ENCODE measurements at regions of chr7 and their contacts with region 1.

Region 1: DNA sequence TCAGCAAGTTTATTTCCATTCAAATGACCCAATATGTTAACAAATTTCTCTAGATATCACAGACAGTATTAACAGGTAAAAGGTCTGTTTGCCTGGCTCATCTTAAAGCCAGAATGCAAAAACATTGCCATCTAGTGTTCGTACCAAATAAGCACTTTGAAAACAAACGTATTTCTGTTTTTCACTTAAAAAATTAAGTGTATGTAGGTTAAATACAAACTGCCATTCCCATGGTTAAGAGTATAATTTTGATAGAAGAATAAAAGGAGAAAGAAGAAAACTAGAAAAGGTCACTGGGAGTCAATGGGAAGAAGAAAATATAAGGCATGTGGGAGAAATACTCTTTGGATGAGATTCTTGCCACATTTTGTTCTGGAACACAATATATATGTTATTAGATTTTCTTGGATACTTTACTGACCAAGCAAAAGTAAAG is 51.0 kb downstream of the ORC5 start:
- DNase-seq: peak; percentile 44
- H3K4me3 ChIP-seq: no peak overlapping the region
- H3K27ac ChIP-seq: no peak overlapping the region
- H3K4me1 ChIP-seq: no peaks in the 10 kb centered on the region
- H3K27me3 ChIP-seq: no peaks in the 10 kb centered on the region
- CTCF ChIP-seq: peak; percentile 34 to 41
- POLR2A ChIP-seq: no peak

Region 2: DNA sequence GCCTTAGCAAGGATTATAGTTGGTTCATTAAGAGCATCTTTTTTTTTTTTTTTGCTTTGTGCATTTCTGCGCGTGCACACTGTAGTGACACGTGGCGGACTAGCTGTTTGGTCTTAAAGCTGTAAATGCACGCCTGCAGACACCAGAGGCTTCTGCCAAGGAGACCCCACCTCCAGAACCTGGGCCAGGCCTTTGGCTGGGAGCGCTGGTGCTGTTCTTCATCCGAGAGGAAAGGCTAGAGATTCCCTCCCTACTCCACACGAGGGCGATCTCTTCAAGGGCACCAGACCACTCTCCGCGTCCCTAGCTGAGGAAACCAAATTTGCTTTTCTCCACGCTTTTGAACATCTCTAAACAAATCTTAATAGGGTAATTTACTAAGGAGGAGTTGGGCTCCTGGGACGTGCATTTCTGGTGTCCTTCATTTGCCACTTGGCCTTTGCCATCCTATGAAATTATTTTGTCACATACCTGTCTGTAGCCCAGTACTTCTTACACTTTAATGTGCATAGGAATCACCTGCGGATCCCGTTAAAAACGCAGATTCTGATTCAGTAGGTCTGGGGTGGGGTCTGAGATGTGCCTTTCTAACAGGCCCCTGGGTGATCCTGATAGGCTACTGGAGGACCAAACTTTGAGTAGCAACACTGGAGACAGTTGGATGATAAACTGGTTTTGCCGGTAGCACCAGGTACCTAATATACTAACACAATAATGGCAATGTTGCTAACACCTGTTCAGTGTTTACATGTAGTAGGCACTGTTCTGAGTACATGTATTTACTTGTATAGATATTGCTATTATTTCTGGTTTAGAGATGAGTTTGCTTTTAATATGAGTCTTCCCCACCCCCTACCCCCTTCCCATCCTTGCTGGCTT is 709.5 kb before region 1 on chr7:
- CTCF ChIA-PET with region 1: interaction called, 3 read pairs
- POLR2A ChIA-PET with region 1: no interaction called
- dilution Hi-C with region 1: no loop called
- intact Hi-C with region 1: loop called (anchors 1 kb)
- DNase-seq: peak; percentile 39
- H3K4me3 ChIP-seq: no peak overlapping the region
- H3K27ac ChIP-seq: no peak overlapping the region
- H3K4me1 ChIP-seq: peaks cover 7% of the 10 kb centered on the region
- H3K27me3 ChIP-seq: peaks cover 35 to 46% of the 10 kb centered on the region in 2 experiments
- CTCF ChIP-seq: peak; percentile 59 to 83
- POLR2A ChIP-seq: no peak

Region 3: DNA sequence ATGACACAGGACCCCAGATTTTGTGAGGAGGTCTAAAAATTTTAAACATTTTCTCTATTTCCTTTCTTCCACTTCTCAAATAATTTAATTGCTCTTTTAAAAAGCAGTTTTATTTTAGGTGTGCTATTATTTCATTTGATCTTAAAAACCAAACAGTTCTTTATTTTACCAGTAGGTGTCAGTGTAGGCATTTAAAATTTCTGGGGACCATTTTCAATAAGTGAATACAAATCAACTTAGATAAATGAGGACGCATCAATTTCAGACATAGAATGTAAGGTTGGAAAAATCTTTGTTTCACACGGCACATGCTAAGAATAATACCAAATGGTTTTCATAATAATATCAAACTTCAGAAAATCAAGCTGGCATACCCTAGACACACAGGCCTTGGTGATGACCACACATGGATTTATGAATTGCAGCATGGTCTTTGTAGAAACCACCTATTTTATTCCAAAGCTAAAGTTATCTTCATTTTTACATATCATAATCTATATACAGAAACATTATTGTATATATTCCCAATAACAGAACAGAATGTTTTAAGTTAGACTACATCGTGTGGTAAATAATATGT is 583.3 kb before region 1 on chr7:
- CTCF ChIA-PET with region 1: interaction called, 26 read pairs
- POLR2A ChIA-PET with region 1: no interaction called
- dilution Hi-C with region 1: no loop called
- intact Hi-C with region 1: loop called (anchors 1 kb)
- DNase-seq: peak; percentile 58
- H3K4me3 ChIP-seq: no peak overlapping the region
- H3K27ac ChIP-seq: no peak overlapping the region
- H3K4me1 ChIP-seq: no peaks in the 10 kb centered on the region
- H3K27me3 ChIP-seq: peaks cover 13 to 14% of the 10 kb centered on the region in 2 experiments
- CTCF ChIP-seq: peak; percentile 24 to 35
- POLR2A ChIP-seq: no peak

Region 4: GRCh38 chr7:103752997-103753396 is 403.9 kb before region 1 on chr7:
- CTCF ChIA-PET with region 1: no interaction called
- POLR2A ChIA-PET with region 1: no interaction called
- dilution Hi-C with region 1: no loop called
- intact Hi-C with region 1: loop called (anchors 10 kb)
- DNase-seq: peak; percentile 21
- H3K4me3 ChIP-seq: no peak overlapping the region
- H3K27ac ChIP-seq: no peak overlapping the region
- H3K4me1 ChIP-seq: no peaks in the 10 kb centered on the region
- H3K27me3 ChIP-seq: no peaks in the 10 kb centered on the region
- CTCF ChIP-seq: no peak
- POLR2A ChIP-seq: no peak

Region 5: GRCh38 chr7:104106108-104106905 is 50.6 kb before region 1 on chr7:
- CTCF ChIA-PET with region 1: interaction called, 15 read pairs
- POLR2A ChIA-PET with region 1: no interaction called
- dilution Hi-C with region 1: no loop called
- intact Hi-C with region 1: no loop called
- DNase-seq: peak; percentile 15
- H3K4me3 ChIP-seq: no peak overlapping the region
- H3K27ac ChIP-seq: no peak overlapping the region
- H3K4me1 ChIP-seq: no peaks in the 10 kb centered on the region
- H3K27me3 ChIP-seq: peaks cover 0 to 1% of the 10 kb centered on the region in 2 experiments
- CTCF ChIP-seq: peak in 1 of 2 donors; percentile 6
- POLR2A ChIP-seq: no peak